ENCODE measurements at regions of chr6 and their contacts with region 1.

Region 1: GRCh38 chr6:26175428-26176181 is 88.4 kb downstream of the HFE start:
- DNase-seq: peak; percentile 72
- ATAC-seq: peak; percentile 55
- H3K4me3 ChIP-seq: no peak overlapping the region
- H3K27ac ChIP-seq: no peak overlapping the region
- H3K4me1 ChIP-seq: peaks cover 12% of the 10 kb centered on the region
- H3K27me3 ChIP-seq: no peaks in the 10 kb centered on the region
- CTCF ChIP-seq: peak; percentile 79
- EP300 ChIP-seq: no peak
- POLR2A ChIP-seq: no peak
- RAD21 ChIP-seq: peak; percentile 76

Region 2: GRCh38 chr6:26187981-26188635 is 12.5 kb after region 1 on chr6:
- CTCF ChIA-PET with region 1: interaction called, 3 read pairs
- POLR2A ChIA-PET with region 1: interaction called, 11 read pairs
- in situ Hi-C with region 1: no loop called
- intact Hi-C with region 1: no loop called
- DNase-seq: peak; percentile 76
- ATAC-seq: peak; percentile 63
- H3K4me3 ChIP-seq: peak overlapping the region; percentile 60 to 77 (median 62)
- H3K27ac ChIP-seq: peak overlapping the region; percentile 82
- H3K4me1 ChIP-seq: peaks cover 18% of the 10 kb centered on the region
- H3K27me3 ChIP-seq: no peaks in the 10 kb centered on the region
- CTCF ChIP-seq: no peak
- EP300 ChIP-seq: no peak
- POLR2A ChIP-seq: no peak
- RAD21 ChIP-seq: no peak

Region 3: DNA sequence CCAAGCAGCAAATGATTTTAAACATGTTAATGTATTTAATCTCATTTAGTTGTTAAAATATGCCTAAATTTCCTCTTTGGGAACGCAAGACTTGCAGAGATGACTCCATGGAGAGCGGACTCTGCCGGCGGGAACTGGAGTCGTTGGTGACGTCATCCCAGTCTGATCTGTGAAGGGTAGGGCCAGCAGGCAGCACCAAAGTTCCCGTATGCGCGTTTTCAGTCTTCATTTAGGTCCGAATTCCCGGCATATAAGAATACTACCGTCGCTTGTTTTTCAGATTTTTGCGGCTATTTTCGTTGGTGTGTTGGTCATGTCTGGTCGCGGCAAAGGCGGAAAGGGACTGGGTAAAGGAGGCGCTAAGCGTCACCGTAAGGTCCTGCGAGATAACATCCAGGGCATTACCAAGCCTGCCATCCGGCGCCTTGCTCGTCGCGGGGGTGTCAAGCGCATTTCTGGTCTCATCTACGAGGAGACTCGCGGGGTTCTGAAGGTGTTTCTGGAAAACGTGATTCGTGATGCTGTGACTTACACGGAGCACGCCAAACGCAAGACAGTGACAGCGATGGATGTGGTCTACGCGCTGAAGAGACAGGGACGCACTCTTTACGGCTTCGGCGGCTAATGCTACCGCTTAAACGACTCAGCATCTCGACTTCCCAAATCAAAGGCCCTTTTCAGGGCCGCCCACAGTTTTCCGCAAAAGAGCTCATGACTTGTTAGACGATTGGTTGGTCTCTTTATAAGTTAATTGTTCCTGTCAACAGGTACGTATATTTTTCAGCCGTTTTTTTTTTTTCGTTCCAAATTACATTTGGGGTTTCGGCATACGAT is 28.9 kb after region 1 on chr6:
- CTCF ChIA-PET with region 1: interaction called, 5 read pairs
- POLR2A ChIA-PET with region 1: interaction called, 4 read pairs
- in situ Hi-C with region 1: no loop called
- intact Hi-C with region 1: loop called (anchors 2 kb)
- DNase-seq: peak; percentile 98
- ATAC-seq: peak; percentile 75
- H3K4me3 ChIP-seq: peak overlapping the region; percentile 62 to 95 (median 77)
- H3K27ac ChIP-seq: peak overlapping the region; percentile 87
- H3K4me1 ChIP-seq: peaks cover 36% of the 10 kb centered on the region
- H3K27me3 ChIP-seq: no peaks in the 10 kb centered on the region; a peak in 1 of 5 replicates
- CTCF ChIP-seq: peak; percentile 53
- EP300 ChIP-seq: peak in 1 of 2 experiments; percentile 89; a peak in 3 of 4 replicates
- POLR2A ChIP-seq: peak; percentile 98 to 99
- RAD21 ChIP-seq: no peak; the same call in 1 of the 2 replicates

Region 4: DNA sequence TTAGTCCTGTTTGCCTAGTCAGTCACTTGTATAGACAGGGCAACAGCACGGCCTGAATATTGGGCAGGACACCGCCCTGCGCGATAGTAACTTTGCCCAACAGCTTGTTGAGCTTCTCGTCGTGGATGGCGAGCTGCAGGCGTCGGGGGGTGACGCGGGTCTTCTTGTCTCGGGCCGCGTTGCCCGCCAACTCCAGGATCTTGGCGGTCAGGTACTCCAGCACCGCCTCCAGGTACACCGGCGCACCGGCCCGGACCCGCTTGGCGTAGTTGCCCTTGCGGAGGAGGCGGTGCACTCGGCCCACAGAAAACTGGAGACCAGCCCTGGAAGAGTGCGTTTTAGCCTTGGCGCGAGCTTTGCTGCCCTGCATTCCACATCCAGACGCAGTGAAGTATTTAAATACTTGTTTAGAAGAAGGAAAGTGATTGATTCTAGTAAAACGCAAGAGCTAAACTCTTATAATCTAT is 96.6 kb after region 1 on chr6:
- CTCF ChIA-PET with region 1: no interaction called
- POLR2A ChIA-PET with region 1: no interaction called
- in situ Hi-C with region 1: no loop called
- intact Hi-C with region 1: loop called (anchors 1 kb)
- DNase-seq: no peak
- ATAC-seq: peak; percentile 81
- H3K4me3 ChIP-seq: peak overlapping the region; percentile 54 to 73 (median 63)
- H3K27ac ChIP-seq: no peak overlapping the region
- H3K4me1 ChIP-seq: peaks cover 47% of the 10 kb centered on the region
- H3K27me3 ChIP-seq: peaks cover 4 to 24% of the 10 kb centered on the region in 2 experiments; a peak in 2 of 5 replicates
- CTCF ChIP-seq: peak; percentile 54
- EP300 ChIP-seq: no peak
- POLR2A ChIP-seq: no peak
- RAD21 ChIP-seq: no peak

Region 5: GRCh38 chr6:26295691-26296555 is 120.3 kb after region 1 on chr6:
- CTCF ChIA-PET with region 1: no interaction called
- POLR2A ChIA-PET with region 1: no interaction called
- in situ Hi-C with region 1: no loop called
- intact Hi-C with region 1: no loop called
- DNase-seq: peak; percentile 86
- ATAC-seq: peak; percentile 88
- H3K4me3 ChIP-seq: peak overlapping the region; percentile 40 to 60 (median 47)
- H3K27ac ChIP-seq: no peak overlapping the region
- H3K4me1 ChIP-seq: peaks cover 35% of the 10 kb centered on the region
- H3K27me3 ChIP-seq: peaks cover 0 to 5% of the 10 kb centered on the region in 2 experiments; a peak in 1 of 5 replicates
- CTCF ChIP-seq: no peak
- EP300 ChIP-seq: peak in 1 of 2 experiments; percentile 28; a peak in 1 of 4 replicates
- POLR2A ChIP-seq: peak; percentile 33 to 57; a peak in 3 of 4 replicates
- RAD21 ChIP-seq: no peak

Region 6: DNA sequence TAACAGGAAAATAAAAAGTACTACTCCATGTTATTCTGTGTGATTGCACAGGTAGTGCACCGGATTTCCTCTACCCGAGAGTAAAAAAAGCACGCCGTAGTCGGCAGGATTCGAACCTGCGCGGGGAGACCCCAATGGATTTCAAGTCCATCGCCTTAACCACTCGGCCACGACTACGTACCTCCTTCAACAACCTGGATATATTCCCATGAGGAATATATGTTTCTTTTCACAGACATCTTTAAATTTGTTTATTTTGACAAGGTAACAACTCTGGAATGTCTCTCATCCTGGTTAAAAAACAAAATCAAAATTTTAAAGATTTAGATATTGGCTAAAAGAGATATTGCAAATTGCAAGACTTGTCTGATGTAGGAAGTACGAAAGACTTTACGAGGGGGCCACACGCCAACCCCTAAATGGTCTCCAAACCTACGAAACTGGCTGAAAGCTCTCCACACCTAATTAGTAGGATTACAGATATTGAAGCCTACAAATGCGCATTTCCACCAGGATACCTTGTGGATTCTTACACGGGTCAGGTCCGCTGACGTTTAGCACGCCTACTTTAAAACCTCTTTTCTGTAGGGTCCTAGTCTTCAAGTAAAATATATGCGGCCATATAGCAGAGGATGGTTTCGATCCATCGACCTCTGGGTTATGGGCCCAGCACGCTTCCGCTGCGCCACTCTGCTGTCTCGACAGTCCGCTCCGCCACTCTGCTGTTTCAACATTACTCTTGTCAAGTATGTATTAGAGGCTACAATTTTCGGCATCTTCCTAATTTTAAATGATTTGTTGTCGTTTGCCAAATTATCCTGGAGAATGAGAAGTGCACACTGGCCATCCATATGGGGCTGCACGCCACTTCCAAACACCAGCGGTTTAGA is 137.1 kb after region 1 on chr6:
- CTCF ChIA-PET with region 1: no interaction called
- POLR2A ChIA-PET with region 1: no interaction called
- in situ Hi-C with region 1: loop called (anchors 10 kb)
- intact Hi-C with region 1: no loop called
- DNase-seq: peak; percentile 92
- ATAC-seq: peak; percentile 77
- H3K4me3 ChIP-seq: peak overlapping the region; percentile 67 to 80 (median 67)
- H3K27ac ChIP-seq: peak overlapping the region; percentile 55
- H3K4me1 ChIP-seq: peaks cover 72% of the 10 kb centered on the region
- H3K27me3 ChIP-seq: no peaks in the 10 kb centered on the region
- CTCF ChIP-seq: no peak
- EP300 ChIP-seq: peak in 1 of 2 experiments; percentile 68; a peak in 2 of 4 replicates
- POLR2A ChIP-seq: no peak
- RAD21 ChIP-seq: no peak

Region 7: DNA sequence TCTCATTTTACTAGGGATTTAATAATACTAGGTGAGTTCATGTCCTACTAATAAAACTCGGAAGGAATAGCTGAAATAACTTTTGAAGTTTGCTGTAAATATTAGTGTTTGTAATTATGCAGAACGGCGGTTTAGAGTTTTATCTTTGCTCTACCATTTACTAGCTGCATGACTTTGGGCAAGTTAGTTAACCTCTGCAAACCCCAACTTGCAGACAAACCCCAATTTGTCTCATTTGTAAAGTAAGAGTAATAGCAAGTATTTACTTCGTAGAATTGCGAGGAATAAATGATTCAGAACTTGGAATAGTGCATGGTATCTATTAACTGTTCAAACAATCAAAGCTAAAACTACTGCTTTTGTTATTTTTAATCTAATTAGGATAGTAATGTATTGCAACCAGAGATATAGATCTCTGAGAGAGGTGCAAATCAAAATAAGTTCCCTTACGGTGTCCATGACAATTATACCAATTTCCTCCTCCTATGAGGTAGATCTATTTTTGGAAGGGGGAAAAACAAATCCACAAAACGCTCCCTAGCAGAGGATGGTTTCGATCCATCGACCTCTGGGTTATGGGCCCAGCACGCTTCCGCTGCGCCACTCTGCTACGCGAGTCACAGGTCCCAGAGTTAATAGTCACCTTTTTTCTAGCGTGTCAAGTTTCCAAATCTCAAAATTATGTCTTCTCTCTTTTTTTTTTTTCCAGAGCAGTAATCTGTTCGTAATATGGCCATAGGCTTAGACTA is 154.3 kb after region 1 on chr6:
- CTCF ChIA-PET with region 1: no interaction called
- POLR2A ChIA-PET with region 1: no interaction called
- in situ Hi-C with region 1: no loop called
- intact Hi-C with region 1: loop called (anchors 5 kb)
- DNase-seq: peak; percentile 68
- ATAC-seq: peak; percentile 51
- H3K4me3 ChIP-seq: peak overlapping the region; percentile 63 to 84 (median 76)
- H3K27ac ChIP-seq: peak overlapping the region; percentile 30
- H3K4me1 ChIP-seq: peaks cover 37% of the 10 kb centered on the region
- H3K27me3 ChIP-seq: no peaks in the 10 kb centered on the region; a peak in 2 of 5 replicates
- CTCF ChIP-seq: 0 out of 2 replicates have a peak, but pooled peaks have one; percentile 10
- EP300 ChIP-seq: no peak
- POLR2A ChIP-seq: no peak
- RAD21 ChIP-seq: no peak

Region 8: DNA sequence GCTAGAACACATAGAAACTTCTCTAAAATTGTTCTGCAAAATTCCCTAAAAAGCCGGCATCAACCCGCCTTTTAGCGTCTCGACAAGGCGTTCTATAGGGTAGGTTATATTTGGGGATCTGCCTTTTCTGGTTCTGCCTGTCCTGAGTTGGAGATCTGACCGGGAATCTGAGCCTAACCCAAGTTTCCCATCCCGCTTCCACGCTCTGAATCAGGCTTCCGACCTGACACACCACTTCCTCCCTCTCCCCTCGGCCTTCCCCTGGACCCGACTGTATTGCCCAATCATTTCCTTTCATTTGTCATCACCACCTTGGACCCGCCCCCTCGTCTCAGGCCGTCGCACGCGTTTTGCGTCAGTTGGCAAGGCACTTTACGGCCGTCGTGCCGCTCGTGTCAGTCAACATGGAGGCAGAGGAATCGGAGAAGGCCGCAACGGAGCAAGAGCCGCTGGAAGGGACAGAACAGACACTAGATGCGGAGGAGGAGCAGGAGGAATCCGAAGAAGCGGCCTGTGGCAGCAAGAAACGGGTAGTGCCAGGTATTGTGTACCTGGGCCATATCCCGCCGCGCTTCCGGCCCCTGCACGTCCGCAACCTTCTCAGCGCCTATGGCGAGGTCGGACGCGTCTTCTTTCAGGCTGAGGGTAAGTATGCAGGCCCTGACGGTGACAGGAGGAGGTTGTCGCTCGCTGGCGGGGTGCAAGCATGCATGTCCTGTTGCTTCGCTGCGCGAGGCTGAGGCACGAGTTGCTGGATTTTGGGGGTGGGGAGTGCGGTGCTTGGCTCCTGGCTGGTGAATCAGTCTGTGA is 421.2 kb after region 1 on chr6 and contains the start of gene ABT1:
- CTCF ChIA-PET with region 1: no interaction called
- POLR2A ChIA-PET with region 1: interaction called, 3 read pairs
- in situ Hi-C with region 1: no loop called
- intact Hi-C with region 1: loop called (anchors 1 kb)
- DNase-seq: peak; percentile 99
- ATAC-seq: peak; percentile 74
- H3K4me3 ChIP-seq: peak within 1 kb of the TSS; percentile 87 to 100 (median 88)
- H3K27ac ChIP-seq: peak within 1 kb of the TSS; percentile 80
- H3K4me1 ChIP-seq: peaks cover 31% of the 10 kb centered on the region
- H3K27me3 ChIP-seq: no peaks in the 10 kb centered on the region; a peak in 1 of 5 replicates
- CTCF ChIP-seq: peak; percentile 43
- EP300 ChIP-seq: peak; percentile 42 to 72; a peak in 2 of 4 replicates
- POLR2A ChIP-seq: peak; percentile 86 to 94
- RAD21 ChIP-seq: no peak
- total RNA-seq, gene ABT1: 38.4 and 50.8 TPM in 2 replicates